Transverse colon (tissue), 4 donors: ENCODE measurements at regions of chr16 and their contacts with region 1.

Region 1: DNA sequence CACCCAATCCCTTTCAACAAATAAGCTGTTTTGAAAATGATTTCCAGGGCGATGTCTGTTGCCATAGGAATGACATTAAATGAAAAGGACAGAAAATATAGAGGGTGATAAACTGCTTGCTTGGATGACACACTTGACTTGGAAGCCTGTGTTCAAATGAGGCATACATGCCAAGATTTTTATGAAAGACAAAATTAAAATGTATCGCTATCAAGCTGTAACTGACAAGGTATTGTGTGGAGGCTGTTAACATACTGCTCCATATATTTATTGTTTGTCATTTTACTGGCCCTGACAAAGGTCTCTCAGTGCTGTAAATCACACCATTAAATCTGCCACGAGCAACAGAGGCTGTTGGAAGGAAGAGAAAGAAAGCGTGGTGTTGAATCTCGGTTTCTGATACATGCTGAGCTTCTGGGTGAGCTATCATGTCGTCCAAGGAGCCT is 456.2 kb upstream of the SALL1 start:
- DNase-seq: no peak
- H3K4me3 ChIP-seq: no peak overlapping the region
- H3K27ac ChIP-seq: no peak overlapping the region
- H3K4me1 ChIP-seq: no peaks in the 10 kb centered on the region
- H3K27me3 ChIP-seq: no peaks in the 10 kb centered on the region
- CTCF ChIP-seq: no peak
- EP300 ChIP-seq: no peak
- POLR2A ChIP-seq: no peak

Region 2: DNA sequence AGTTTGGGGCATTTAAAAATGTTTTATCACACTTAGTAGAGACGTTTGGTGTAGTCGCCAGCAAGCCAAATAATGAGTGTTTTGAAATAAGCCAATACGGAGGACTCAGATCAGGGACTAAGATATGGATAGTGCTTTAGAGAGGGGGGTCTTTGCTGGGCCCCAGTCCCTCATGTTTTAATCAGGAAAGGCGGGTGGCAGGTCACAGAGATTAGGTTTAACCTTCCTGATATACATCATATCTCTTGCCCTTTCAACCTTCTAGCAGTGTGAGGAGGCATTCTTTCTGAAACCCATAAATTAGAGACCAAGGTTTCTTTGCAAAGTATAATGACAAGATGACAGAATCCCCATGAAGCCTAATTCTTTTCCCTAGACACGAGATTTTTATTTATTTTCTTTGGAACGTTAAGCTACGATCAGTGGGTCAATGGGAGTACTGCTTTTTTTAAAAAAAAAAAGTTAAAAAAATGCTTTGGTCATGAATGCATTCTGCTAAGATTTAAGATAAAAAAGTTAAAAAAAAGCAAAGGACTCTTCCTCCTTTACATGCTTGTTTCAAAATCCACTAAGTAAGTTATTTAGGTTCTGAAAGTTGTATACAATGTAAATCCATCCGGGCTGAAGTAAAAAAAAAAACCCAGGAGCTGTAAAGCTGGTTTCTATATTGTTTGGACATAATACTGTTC is 116.0 kb after region 1 on chr16:
- in situ Hi-C with region 1: loop called in 1 of 4 experiments (anchors 25 kb)
- intact Hi-C with region 1: no loop called
- DNase-seq: no peak
- H3K4me3 ChIP-seq: no peak overlapping the region
- H3K27ac ChIP-seq: no peak overlapping the region
- H3K4me1 ChIP-seq: no peaks in the 10 kb centered on the region
- H3K27me3 ChIP-seq: no peaks in the 10 kb centered on the region
- CTCF ChIP-seq: no peak
- EP300 ChIP-seq: no peak
- POLR2A ChIP-seq: no peak